CD4-positive, alpha-beta memory T cell (primary cell): ENCODE measurements at regions of chr1 and their contacts with region 1.

Region 1: GRCh38 chr1:172826096-172826743 is 167.3 kb downstream of the FASLG start:
- DNase-seq: peak in 1 of 5 donors; percentile 15
- H3K4me3 ChIP-seq: no peak overlapping the region
- H3K4me3 Mint-ChIP-seq: no peak overlapping the region
- H3K27ac ChIP-seq: no peak overlapping the region
- H3K27ac Mint-ChIP-seq: no peak overlapping the region
- H3K4me1 ChIP-seq: peaks cover 24% of the 10 kb centered on the region
- H3K4me1 Mint-ChIP-seq: no peaks in the 10 kb centered on the region
- H3K27me3 ChIP-seq: no peaks in the 10 kb centered on the region
- H3K27me3 Mint-ChIP-seq: no peaks in the 10 kb centered on the region

Region 2: GRCh38 chr1:172719694-172720138 is 106.5 kb before region 1 on chr1:
- CTCF ChIA-PET with region 1: no interaction called
- POLR2A ChIA-PET with region 1: no interaction called
- intact Hi-C with region 1: no loop called
- DNase-seq: peak in 4 of 5 donors; percentile 54 to 60 (median 56)
- H3K4me3 ChIP-seq: no peak overlapping the region
- H3K4me3 Mint-ChIP-seq: peak overlapping the region in 1 of 8 donors; percentile 9
- H3K27ac ChIP-seq: no peak overlapping the region
- H3K27ac Mint-ChIP-seq: peak overlapping the region in 3 of 7 donors; percentile 3 to 37 (median 5)
- H3K4me1 ChIP-seq: peaks cover 16% of the 10 kb centered on the region
- H3K4me1 Mint-ChIP-seq: peaks cover 24 to 43% (median 31%) of the 10 kb centered on the region in 4 donors
- H3K27me3 ChIP-seq: no peaks in the 10 kb centered on the region
- H3K27me3 Mint-ChIP-seq: no peaks in the 10 kb centered on the region

Region 3: DNA sequence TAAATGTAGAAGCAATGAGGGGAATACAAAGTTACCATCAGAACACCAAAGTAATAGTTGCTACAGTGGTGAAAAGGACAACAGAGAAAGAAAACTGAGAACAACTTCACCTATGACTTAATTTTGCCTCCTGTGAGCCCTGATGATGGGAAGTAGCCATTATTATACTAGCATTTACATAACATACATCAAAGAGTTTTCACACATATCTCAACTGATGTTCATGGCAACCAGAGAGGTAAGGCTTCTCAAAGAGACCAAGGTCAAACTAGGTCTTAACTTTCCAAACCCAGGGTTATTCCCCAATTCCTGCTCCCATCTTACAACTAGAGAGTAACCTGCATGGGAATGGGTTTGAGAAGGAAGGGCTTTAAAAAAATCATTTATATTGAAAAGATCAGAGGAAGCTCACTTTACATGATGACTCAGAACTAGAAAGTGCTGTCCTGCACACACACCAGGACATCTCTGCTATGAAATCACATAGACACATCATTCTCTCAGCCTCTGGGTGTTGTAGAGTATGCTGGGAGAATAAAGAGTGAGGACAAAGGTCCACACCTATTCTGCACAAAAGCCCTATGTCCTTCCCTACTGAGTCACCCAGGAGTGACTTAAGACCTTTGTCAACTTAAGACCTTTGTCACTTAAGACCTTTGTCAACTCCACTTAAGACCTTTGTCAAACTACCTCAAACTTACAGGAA is 44.8 kb after region 1 on chr1:
- CTCF ChIA-PET with region 1: no interaction called
- POLR2A ChIA-PET with region 1: no interaction called
- intact Hi-C with region 1: loop called (anchors 5 kb)
- DNase-seq: peak in 1 of 5 donors; percentile 1
- H3K4me3 ChIP-seq: no peak overlapping the region
- H3K4me3 Mint-ChIP-seq: no peak overlapping the region
- H3K27ac ChIP-seq: no peak overlapping the region
- H3K27ac Mint-ChIP-seq: peak overlapping the region in 2 of 7 donors; percentile 4 to 6
- H3K4me1 ChIP-seq: peaks cover 24% of the 10 kb centered on the region
- H3K4me1 Mint-ChIP-seq: peaks cover 18 to 29% (median 25%) of the 10 kb centered on the region in 4 donors
- H3K27me3 ChIP-seq: no peaks in the 10 kb centered on the region
- H3K27me3 Mint-ChIP-seq: no peaks in the 10 kb centered on the region

Region 4: GRCh38 chr1:173050865-173051264 is 224.6 kb after region 1 on chr1 and contains the start of gene TNFSF18:
- CTCF ChIA-PET with region 1: interaction called, 3 read pairs
- POLR2A ChIA-PET with region 1: interaction called, 3 read pairs
- intact Hi-C with region 1: loop called (anchors 10 kb)
- DNase-seq: no peak
- H3K4me3 ChIP-seq: no peak within 1 kb of the TSS
- H3K4me3 Mint-ChIP-seq: no peak within 1 kb of the TSS
- H3K27ac ChIP-seq: no peak within 1 kb of the TSS
- H3K27ac Mint-ChIP-seq: no peak within 1 kb of the TSS
- H3K4me1 ChIP-seq: no peaks in the 10 kb centered on the region
- H3K4me1 Mint-ChIP-seq: peaks cover 0 to 5% (median 3%) of the 10 kb centered on the region in 4 donors
- H3K27me3 ChIP-seq: no peaks in the 10 kb centered on the region
- H3K27me3 Mint-ChIP-seq: no peaks in the 10 kb centered on the region
- total RNA-seq, gene TNFSF18: not detected

Region 5: GRCh38 chr1:173202430-173203145 is 376.4 kb after region 1 on chr1:
- CTCF ChIA-PET with region 1: interaction called, 205 read pairs
- POLR2A ChIA-PET with region 1: interaction called, 10 read pairs
- intact Hi-C with region 1: loop called (anchors 1 kb)
- DNase-seq: no peak
- H3K4me3 ChIP-seq: no peak overlapping the region
- H3K4me3 Mint-ChIP-seq: no peak overlapping the region
- H3K27ac ChIP-seq: no peak overlapping the region
- H3K27ac Mint-ChIP-seq: peak overlapping the region in 3 of 7 donors; percentile 3 to 88 (median 66)
- H3K4me1 ChIP-seq: peaks cover 41% of the 10 kb centered on the region
- H3K4me1 Mint-ChIP-seq: peaks cover 31 to 47% (median 37%) of the 10 kb centered on the region in 4 donors
- H3K27me3 ChIP-seq: no peaks in the 10 kb centered on the region
- H3K27me3 Mint-ChIP-seq: no peaks in the 10 kb centered on the region